Brain microvascular endothelial cell (primary cell): ENCODE measurements at regions of chr17 and their contacts with region 1.

Region 1: DNA sequence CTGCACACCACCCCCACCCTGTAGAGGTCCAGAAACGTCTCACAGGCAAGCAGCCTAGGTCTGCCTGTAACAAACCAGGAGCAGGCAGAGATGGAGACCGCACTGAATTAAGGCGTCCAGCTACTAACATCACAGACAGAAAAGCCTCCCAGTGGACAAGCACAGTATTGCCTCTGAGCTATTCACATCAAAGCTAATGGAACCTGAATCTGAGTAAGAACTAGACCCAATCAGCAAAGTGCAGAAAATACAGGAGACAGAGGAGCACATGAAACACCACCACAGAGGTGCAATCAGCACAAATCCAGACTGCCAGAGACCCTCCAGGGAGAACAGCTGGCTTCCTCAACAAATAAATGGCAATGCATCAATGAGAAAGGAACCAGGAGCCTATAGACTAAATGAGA is 22.2 kb upstream of the PEMT start:
- DNase-seq: peak; percentile 82
- H3K4me3 ChIP-seq: no peak overlapping the region
- H3K27ac ChIP-seq: no peak overlapping the region
- H3K27me3 ChIP-seq: no peaks in the 10 kb centered on the region
- CTCF ChIP-seq: peak; percentile 85

Region 2: GRCh38 chr17:17356149-17356930 is 257.4 kb before region 1 on chr17:
- in situ Hi-C with region 1: loop called (anchors 25 kb)
- DNase-seq: peak; percentile 76
- H3K4me3 ChIP-seq: no peak overlapping the region
- H3K27ac ChIP-seq: no peak overlapping the region
- H3K27me3 ChIP-seq: no peaks in the 10 kb centered on the region
- CTCF ChIP-seq: peak; percentile 100

Region 3: GRCh38 chr17:17675925-17676534 is 62.3 kb after region 1 on chr17:
- in situ Hi-C with region 1: no loop called
- DNase-seq: no peak
- H3K4me3 ChIP-seq: no peak overlapping the region
- H3K27ac ChIP-seq: no peak overlapping the region
- H3K27me3 ChIP-seq: no peaks in the 10 kb centered on the region
- CTCF ChIP-seq: no peak